ENCODE measurements at regions of chr3 and their contacts with region 1.

Region 1: DNA sequence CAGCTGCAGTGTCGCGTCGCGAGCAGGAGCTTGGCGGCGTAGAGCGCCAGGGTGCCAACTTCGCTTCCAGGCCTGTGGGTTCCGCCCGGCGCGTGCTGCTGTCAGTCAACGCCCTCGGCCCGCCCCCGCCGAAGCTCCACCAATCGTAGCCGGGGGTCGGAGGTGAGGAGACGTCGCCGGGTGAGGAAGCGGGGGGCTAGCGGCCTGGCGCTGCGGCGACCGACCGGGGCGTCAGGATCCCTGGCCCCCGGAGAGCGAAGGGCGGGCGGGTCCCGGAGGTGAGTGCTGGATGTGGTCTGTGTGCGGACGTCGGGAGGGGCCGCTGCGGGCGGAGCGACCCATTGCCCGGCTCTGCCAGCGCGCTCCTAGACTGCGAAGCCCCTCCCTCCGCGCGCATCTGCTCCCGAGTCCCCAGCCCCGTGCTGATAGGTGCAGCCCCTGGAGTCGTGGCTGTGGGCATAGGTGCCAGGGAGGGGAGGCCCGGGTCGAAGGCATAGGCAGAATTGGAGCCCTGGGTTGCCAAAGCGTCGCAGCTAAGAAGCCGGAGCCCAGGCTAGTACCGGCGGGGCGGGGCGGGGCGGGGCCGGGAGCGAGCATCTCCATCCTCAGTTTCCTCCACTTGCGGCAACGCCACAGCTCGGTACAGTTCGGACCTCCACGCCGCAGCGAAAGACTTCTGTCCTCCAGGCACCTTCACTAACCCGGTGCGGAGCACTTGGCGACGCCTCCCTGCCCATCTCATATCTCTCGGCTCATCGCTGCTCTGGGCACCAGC is at the start of gene NXPE3:
- DNase-seq: peak; percentile 92
- H3K4me3 ChIP-seq: peak within 1 kb of the TSS; percentile 77
- H3K27ac ChIP-seq: peak within 1 kb of the TSS; percentile 87
- H3K4me1 ChIP-seq: peaks cover 62% of the 10 kb centered on the region
- CTCF ChIP-seq: no peak
- total RNA-seq, gene NXPE3: 16.7 and 17.9 TPM in 2 replicates

Region 2: DNA sequence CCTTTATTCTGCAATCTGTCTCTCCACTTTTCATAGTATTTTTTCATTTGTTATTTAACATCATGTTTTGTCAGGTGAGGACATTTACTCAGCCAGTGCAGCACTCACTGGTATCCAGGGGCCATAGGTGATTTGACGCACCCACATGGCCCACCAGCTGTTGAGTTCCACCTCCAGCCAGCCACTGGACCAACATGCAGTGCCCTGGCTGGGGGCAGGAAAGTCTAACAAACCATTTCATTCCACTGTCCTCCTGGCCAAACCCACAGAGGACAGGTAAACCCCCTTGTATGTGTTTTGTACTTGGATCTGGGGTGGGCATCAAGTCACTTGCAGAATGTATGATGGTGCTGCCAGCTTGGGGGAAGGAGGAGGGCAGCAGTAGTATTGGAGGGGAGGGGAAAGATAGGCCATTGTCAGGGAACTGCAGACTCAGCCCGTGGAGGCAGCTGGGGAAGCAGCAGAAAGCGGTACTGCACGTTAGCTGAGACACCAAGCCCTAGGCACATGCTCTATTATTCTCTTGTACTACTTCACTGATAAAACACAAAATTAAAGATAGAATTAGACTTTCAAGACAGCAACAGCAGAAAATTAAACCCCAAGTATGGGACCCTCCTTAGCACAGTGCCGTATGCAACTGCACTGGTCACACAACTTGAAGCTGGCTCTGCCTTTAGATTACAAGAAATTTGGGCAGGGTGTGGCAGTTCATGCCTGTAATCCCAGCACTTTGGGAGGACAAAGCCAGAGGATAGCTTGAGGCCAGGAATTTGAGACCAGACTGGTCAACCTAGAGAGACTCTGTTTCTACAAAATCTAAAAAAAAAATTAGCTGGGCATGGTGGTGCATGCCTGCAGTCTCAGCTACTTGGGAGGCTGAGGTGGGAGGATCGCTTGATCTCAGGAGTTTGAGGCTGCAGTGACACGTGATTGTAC is 77.3 kb before region 1 on chr3:
- CTCF ChIA-PET with region 1: no interaction called
- POLR2A ChIA-PET with region 1: no interaction called
- intact Hi-C with region 1: loop called (anchors 2 kb)
- DNase-seq: peak; percentile 45
- H3K4me3 ChIP-seq: peak overlapping the region; percentile 13
- H3K27ac ChIP-seq: peak overlapping the region; percentile 72
- H3K4me1 ChIP-seq: peaks cover 27% of the 10 kb centered on the region
- CTCF ChIP-seq: no peak

Measured in OCI-LY7 (cell line).